Gastrocnemius medialis (tissue), 4 donors: ENCODE measurements at regions of chr2 and their contacts with region 1.

Region 1: GRCh38 chr2:212984116-212984515 is 167.3 kb downstream of the IKZF2 start:
- DNase-seq: no peak
- ATAC-seq: no peak
- H3K4me3 ChIP-seq: no peak overlapping the region
- H3K27ac ChIP-seq: no peak overlapping the region
- H3K4me1 ChIP-seq: peaks cover 0 to 3% of the 10 kb centered on the region in 2 donors
- H3K27me3 ChIP-seq: no peaks in the 10 kb centered on the region
- CTCF ChIP-seq: no peak
- POLR2A ChIP-seq: no peak

Region 2: GRCh38 chr2:212953170-212953569 is 30.9 kb before region 1 on chr2:
- in situ Hi-C with region 1: no loop called
- intact Hi-C with region 1: loop called (anchors 1 kb)
- DNase-seq: no peak
- ATAC-seq: no peak
- H3K4me3 ChIP-seq: no peak overlapping the region
- H3K27ac ChIP-seq: no peak overlapping the region
- H3K4me1 ChIP-seq: peaks cover 19 to 21% of the 10 kb centered on the region in 2 donors
- H3K27me3 ChIP-seq: no peaks in the 10 kb centered on the region
- CTCF ChIP-seq: no peak
- POLR2A ChIP-seq: no peak